ENCODE measurements at regions of chr6 and their contacts with region 1.

Region 1: GRCh38 chr6:106300944-106301343 is 24.6 kb downstream of the ATG5 start:
- DNase-seq: peak; percentile 59
- ATAC-seq: no peak
- H3K4me3 ChIP-seq: no peak overlapping the region
- H3K27ac ChIP-seq: no peak overlapping the region
- H3K4me1 ChIP-seq: no peaks in the 10 kb centered on the region
- H3K27me3 ChIP-seq: no peaks in the 10 kb centered on the region
- CTCF ChIP-seq: peak; percentile 73

Region 2: DNA sequence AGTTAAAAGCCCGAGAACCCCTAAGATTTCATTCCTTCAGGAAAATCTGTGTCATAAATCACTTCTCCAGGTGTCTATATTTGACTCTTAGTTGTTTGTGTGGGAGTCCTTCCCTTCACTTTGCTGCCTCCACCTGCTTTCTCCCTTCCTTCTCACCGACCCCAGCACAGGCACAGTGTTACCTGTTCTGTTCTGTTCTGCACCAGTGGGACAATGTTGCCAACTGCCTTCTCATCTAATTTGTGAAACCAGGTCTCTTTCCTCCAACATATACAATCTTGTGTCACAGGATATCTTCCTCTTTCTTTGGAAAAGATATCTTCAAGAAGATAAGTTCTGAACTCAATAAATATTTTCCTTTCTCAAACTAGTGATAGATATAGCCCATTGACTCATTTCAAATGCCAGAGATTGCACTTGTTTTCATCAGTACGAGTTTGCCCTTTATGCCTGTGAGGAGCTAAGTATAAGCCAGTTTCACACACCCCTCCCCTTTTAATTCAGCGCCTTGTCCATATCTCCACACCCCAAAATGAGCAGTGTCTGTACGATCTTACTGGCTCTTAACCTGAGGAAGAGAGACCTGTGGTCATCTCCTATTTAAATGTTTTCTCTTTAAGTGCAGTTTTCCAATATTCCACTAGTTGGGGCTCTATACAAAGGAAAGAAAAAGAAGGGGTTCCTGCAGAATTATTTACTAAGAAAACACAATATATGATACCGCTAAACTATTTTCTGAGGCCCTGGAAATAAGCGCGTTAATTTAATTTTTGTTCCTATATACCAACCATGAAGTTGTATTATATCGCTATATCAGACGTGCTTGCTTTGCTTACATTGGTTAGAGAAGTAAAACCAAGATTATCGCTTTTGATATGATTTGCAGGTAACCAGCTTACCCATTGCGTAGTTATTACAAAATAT is 816.4 kb before region 1 on chr6:
- CTCF ChIA-PET with region 1: no interaction called
- POLR2A ChIA-PET with region 1: no interaction called
- intact Hi-C with region 1: loop called (anchors 2 kb)
- DNase-seq: peak; percentile 79
- ATAC-seq: peak; percentile 68
- H3K4me3 ChIP-seq: no peak overlapping the region
- H3K27ac ChIP-seq: 0 out of 2 replicates have a peak overlapping the region, but pooled peaks have one; percentile 4
- H3K4me1 ChIP-seq: peaks cover 24% of the 10 kb centered on the region
- H3K27me3 ChIP-seq: no peaks in the 10 kb centered on the region
- CTCF ChIP-seq: peak; percentile 88

Region 3: GRCh38 chr6:106069478-106069877 is 231.5 kb before region 1 on chr6:
- CTCF ChIA-PET with region 1: no interaction called
- POLR2A ChIA-PET with region 1: no interaction called
- intact Hi-C with region 1: no loop called
- DNase-seq: peak; percentile 40
- ATAC-seq: no peak
- H3K4me3 ChIP-seq: no peak overlapping the region
- H3K27ac ChIP-seq: no peak overlapping the region
- H3K4me1 ChIP-seq: peaks cover 2% of the 10 kb centered on the region; the same call in 1 of the 2 replicates
- H3K27me3 ChIP-seq: no peaks in the 10 kb centered on the region
- CTCF ChIP-seq: no peak

Measured in PC-3 (cell line).